ENCODE measurements at regions of chr10 and their contacts with region 1.

Region 1: GRCh38 chr10:6920072-6921019 is 340.3 kb upstream of the PRKCQ start:
- DNase-seq: peak; percentile 90
- H3K4me3 Mint-ChIP-seq: no peak overlapping the region
- H3K27ac Mint-ChIP-seq: no peak overlapping the region
- H3K4me1 Mint-ChIP-seq: peaks cover 13% of the 10 kb centered on the region
- H3K27me3 Mint-ChIP-seq: no peaks in the 10 kb centered on the region

Region 2: GRCh38 chr10:6936931-6937330 is 16.6 kb after region 1 on chr10:
- CTCF ChIA-PET with region 1: interaction called, 18 read pairs
- intact Hi-C with region 1: no loop called
- DNase-seq: no peak
- H3K4me3 Mint-ChIP-seq: no peak overlapping the region
- H3K27ac Mint-ChIP-seq: no peak overlapping the region
- H3K4me1 Mint-ChIP-seq: no peaks in the 10 kb centered on the region
- H3K27me3 Mint-ChIP-seq: peaks cover 2% of the 10 kb centered on the region

Region 3: GRCh38 chr10:6958254-6958653 is 37.9 kb after region 1 on chr10:
- CTCF ChIA-PET with region 1: interaction called, 12 read pairs
- intact Hi-C with region 1: no loop called
- DNase-seq: no peak
- H3K4me3 Mint-ChIP-seq: no peak overlapping the region
- H3K27ac Mint-ChIP-seq: no peak overlapping the region
- H3K4me1 Mint-ChIP-seq: peaks cover 11% of the 10 kb centered on the region
- H3K27me3 Mint-ChIP-seq: no peaks in the 10 kb centered on the region

Region 4: DNA sequence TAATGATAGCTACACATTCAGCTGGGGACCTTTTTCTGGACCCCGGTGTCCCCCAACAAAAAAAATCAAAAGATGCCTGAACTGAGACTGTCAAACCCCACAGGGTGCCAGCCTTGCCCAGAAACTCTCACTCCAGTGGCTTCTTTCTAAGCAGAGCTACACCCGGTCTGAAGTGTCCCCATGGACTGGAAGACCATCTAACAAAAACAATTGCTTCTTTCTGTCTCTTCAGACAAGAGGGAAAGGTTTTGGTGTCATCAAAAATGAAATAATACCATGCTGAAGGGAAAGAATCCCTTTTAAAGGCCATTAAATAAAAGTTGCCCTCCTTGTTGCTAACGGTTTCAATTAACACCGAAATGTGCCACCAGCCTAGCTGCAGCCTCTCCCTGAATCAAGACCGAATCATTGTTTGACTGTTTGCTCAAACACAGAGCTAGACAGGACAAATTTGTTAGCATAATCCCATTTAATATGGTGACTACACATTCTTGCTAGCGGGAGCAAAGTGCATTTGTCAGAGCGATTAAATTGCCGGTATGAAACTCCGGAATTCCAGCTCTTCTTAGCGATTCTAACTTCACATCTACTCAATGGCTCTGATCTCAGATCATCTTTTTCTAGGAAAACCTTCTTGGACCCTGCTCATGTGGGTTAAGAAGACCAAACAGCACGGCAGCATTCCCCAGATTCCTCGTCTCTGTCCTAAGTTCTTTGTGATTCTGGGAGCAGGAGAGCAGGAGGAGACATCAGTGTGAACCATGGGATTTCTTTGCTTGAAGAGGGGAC is 57.2 kb after region 1 on chr10:
- CTCF ChIA-PET with region 1: interaction called, 5 read pairs
- intact Hi-C with region 1: loop called (anchors 5 kb)
- DNase-seq: no peak
- H3K4me3 Mint-ChIP-seq: no peak overlapping the region
- H3K27ac Mint-ChIP-seq: no peak overlapping the region
- H3K4me1 Mint-ChIP-seq: peaks cover 5% of the 10 kb centered on the region
- H3K27me3 Mint-ChIP-seq: peaks cover 3% of the 10 kb centered on the region

Region 5: GRCh38 chr10:7121154-7121810 is 200.9 kb after region 1 on chr10:
- CTCF ChIA-PET with region 1: interaction called, 6 read pairs
- intact Hi-C with region 1: loop called (anchors 1 kb)
- DNase-seq: peak; percentile 86
- H3K4me3 Mint-ChIP-seq: no peak overlapping the region
- H3K27ac Mint-ChIP-seq: no peak overlapping the region
- H3K4me1 Mint-ChIP-seq: peaks cover 5% of the 10 kb centered on the region
- H3K27me3 Mint-ChIP-seq: no peaks in the 10 kb centered on the region

Region 6: GRCh38 chr10:7417103-7417623 is 496.8 kb after region 1 on chr10:
- CTCF ChIA-PET with region 1: interaction called, 68 read pairs
- intact Hi-C with region 1: loop called (anchors 1 kb)
- DNase-seq: no peak
- H3K4me3 Mint-ChIP-seq: no peak overlapping the region
- H3K27ac Mint-ChIP-seq: no peak overlapping the region
- H3K4me1 Mint-ChIP-seq: peaks cover 17% of the 10 kb centered on the region
- H3K27me3 Mint-ChIP-seq: peaks cover 11% of the 10 kb centered on the region

Region 7: DNA sequence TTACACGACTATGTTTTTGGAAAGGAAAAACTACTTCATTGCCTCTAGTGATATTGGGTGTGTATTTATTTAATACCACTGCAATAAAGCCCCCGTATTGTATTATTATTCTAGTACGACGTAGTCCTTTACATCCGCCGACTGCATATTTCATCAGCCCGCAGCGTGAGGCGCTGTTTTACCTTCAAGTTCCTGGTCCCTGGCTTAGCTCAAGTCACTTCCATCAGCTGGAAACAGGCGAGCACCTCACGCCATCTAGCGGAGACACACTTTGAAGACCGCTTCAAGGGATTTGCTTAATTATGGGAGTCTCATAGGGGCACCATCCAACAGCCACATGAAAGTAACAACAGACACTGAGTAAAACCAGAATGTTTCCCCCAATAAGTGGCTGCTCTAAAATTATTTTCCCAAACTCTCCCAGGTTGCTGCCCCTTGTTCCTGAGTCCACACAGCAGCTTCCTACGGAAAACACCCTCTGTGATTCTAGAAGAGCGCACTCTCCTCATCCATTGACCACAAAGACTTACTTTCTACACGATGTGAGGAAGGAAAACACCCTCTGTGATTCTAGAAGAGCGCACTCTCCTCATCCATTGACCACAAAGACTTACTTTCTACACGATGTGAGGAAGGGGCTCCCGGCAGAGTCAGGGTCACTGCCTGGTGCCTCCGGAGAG is 767.0 kb after region 1 on chr10:
- CTCF ChIA-PET with region 1: interaction called, 3 read pairs
- intact Hi-C with region 1: loop called (anchors 2 kb)
- DNase-seq: peak; percentile 92
- H3K4me3 Mint-ChIP-seq: no peak overlapping the region
- H3K27ac Mint-ChIP-seq: no peak overlapping the region
- H3K4me1 Mint-ChIP-seq: peaks cover 10% of the 10 kb centered on the region
- H3K27me3 Mint-ChIP-seq: no peaks in the 10 kb centered on the region